ENCODE measurements at regions of chr5 and their contacts with region 1.

Region 1: GRCh38 chr5:179986328-179986727 is 78.6 kb upstream of the TBC1D9B start:
- DNase-seq: no peak
- ATAC-seq: peak; percentile 81

Region 2: DNA sequence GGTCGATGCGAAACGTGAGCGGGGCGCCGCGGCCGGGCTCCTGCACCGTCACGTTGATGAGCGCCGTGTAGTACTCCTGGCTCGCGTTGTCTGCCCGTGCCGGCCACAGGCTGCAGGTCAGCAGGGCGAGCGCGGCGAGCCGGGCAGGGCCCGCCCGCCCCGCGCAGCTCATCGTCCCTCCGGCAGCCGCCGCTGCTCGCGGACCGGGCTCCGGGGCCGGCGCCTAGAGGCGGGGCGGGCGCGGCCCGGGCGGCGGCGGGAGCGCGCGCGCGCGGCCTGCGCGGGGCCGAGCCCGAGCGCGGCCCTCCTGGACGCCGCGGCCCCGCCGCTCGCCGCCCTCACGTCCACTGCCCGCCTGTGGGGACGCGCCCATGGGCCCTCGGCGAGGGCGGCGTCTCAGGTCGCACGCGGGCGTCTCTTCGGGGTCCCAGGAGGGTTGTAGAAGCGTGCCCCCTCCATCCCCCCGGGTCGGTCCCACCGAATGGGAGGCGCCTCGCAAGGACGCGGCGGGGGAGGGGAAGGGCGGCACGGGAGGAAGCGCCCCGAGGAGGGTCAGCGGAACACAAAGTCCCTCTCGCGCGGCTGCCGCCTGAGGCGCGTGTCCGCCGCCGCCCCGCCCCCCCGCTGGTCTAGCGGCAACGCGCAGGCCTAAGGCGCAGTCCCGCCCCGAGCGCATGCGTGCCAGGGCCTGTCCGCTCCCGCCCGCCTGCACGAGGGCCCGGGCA is 85.4 kb after region 1 on chr5 and contains the start of gene RNF130:
- intact Hi-C with region 1: loop called (anchors 10 kb)
- DNase-seq: peak; percentile 95
- ATAC-seq: peak; percentile 96
- total RNA-seq, gene RNF130: 49.8 TPM

Region 3: DNA sequence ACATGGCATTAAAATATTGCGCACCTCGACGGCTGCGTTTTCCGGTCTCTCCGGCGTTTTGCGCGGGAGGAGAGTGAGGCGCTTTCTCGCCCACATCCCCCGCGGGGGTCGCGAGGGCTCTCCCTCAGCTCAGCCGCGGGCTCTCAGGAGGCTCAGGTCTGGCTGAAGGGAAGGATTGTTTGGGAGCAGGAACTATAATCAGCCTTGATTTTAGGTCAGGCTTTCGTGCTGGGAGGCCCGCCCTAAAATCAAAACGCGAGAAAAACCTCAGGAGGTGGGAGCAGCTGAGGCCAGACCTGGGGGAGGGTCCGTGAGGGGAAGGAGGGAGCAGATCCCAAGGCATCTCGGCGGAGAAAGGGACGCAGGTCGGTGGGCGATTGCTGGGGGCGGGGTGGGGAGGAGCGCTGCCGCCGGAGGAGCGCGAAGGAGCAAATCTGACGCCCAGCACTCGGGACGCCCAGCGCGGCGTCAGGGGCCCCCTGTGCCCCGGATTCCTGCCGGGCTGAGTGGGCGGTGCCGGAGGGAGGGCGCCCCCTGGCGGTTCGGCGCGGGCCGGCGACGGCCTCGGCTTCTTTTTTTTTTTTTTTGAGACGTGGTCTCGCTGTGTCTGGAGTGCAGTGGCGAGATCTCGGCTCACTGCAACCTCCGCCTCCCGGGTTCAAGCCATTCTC is 103.9 kb after region 1 on chr5:
- intact Hi-C with region 1: loop called (anchors 5 kb)
- DNase-seq: peak; percentile 86
- ATAC-seq: peak; percentile 96

Measured in Right ventricle myocardium superior (tissue), 1 donor.